Dendritic cell treated with granulocyte-macrophage colony-stimulating factor and Interleukin-4, amounts not matched to agents 40 ng/mL and 50 ng/mL, for 4 days (primary cell): ENCODE measurements at regions of chr3 and their contacts with region 1.

Region 1: DNA sequence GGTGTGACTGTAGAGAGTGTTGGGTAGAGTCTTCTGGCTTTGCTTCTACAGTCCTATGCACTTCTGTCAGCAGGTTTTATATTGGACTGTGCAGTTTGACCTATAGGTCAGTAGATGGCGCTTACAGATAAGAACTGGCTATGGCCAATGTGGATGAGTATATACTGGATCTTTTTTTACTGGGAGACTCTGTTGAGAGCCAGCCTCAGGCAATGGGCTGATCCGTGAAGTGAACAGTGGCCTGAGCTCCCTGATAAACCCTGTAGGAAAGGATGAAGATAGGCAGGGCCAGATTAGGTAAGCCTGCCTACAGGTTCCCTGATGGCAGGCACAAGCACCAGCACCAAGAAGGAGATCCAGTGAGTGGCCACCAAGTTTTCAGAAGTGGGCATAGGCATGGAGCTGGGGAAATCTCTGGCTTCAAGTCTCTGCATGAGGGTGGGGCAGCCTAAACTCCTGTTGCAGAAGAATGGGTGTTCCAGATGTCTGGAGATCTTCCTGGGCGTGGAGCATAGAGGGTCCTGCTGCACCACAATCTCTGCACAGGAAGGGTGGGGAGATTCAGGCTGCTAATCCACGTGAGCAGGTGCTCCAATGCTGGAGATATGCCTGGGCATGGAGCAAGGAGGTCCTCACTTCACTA is 326.0 kb upstream of the SGO1 start:
- H3K4me3 Mint-ChIP-seq: no peak overlapping the region
- H3K27ac Mint-ChIP-seq: no peak overlapping the region
- H3K4me1 Mint-ChIP-seq: no peaks in the 10 kb centered on the region
- H3K27me3 Mint-ChIP-seq: no peaks in the 10 kb centered on the region

Region 2: DNA sequence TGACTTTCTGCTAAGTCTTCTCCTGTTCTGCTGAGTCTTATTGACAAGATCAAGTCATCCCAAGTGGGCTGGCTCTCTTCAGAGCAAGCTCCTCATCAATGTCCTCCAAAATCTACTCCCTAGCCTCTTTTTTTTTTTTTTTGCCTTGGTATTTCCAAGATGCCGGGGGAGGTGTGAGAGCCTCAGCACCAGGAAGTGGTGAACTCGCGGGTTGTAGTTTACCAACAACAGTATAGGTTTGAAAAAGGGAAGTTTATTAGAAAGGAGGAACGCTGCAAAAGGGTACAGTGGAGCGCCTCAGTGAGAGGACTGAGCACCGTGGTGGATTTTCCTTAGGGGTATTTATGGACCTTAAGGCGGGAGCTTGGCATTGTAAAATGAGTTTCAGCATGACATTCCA is 231.7 kb before region 1 on chr3:
- intact Hi-C with region 1: no loop called
- H3K4me3 Mint-ChIP-seq: no peak overlapping the region
- H3K27ac Mint-ChIP-seq: no peak overlapping the region
- H3K4me1 Mint-ChIP-seq: peaks cover 8% of the 10 kb centered on the region
- H3K27me3 Mint-ChIP-seq: no peaks in the 10 kb centered on the region

Region 3: GRCh38 chr3:21551019-21551418 is 1039.0 kb after region 1 on chr3:
- intact Hi-C with region 1: loop called (anchors 2 kb)
- H3K4me3 Mint-ChIP-seq: no peak overlapping the region
- H3K27ac Mint-ChIP-seq: no peak overlapping the region
- H3K4me1 Mint-ChIP-seq: no peaks in the 10 kb centered on the region
- H3K27me3 Mint-ChIP-seq: no peaks in the 10 kb centered on the region

Region 4: DNA sequence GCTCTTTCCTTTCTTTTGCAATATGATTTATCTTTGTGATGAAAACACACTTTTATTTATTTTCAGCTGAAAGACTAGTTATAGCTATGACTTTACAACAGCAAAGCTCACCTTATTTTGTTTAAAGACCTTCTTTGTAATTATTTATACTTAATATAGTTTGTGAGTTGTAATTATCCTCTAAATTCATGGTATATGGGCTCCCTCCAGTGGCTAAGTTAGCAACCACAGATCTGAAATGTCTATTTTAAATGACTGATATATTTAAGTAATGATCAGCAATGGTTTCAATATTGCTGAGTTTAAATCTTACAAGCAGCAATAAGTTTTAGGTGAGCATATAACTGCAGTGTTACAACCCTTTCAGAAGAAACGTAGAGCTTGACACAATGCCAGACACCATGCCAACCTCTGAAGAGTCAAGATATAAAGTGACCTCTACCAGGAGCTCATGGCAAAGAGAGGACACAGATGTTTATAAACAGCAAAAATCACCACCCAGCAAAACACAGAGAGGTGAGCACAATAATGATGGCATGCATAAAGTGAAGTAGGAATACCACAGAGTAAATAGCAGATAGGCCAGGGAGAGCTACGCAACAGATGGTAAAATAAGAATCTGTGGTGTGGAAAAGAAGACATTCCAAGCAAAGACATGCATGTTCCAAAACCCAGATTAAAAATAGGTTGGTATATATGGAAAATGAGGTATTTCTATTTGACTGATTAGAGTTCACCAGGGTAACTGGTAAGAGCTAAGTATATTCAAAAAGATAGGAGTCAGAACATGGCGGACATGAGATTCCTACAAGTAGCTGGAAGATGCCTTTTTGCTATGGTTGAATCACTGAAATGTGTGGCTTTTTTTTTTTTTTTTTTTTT is 1382.7 kb after region 1 on chr3:
- intact Hi-C with region 1: loop called (anchors 10 kb)
- H3K4me3 Mint-ChIP-seq: no peak overlapping the region
- H3K27ac Mint-ChIP-seq: no peak overlapping the region
- H3K4me1 Mint-ChIP-seq: no peaks in the 10 kb centered on the region
- H3K27me3 Mint-ChIP-seq: no peaks in the 10 kb centered on the region